ENCODE measurements at regions of chr1 and their contacts with region 1.

Region 1: GRCh38 chr1:192580351-192580962 is 4.9 kb downstream of the RGS1 start:
- DNase-seq: peak in 3 of 9 donors; percentile 15 to 44 (median 38)
- ATAC-seq: peak; percentile 40
- H3K4me3 ChIP-seq: no peak overlapping the region
- H3K4me3 Mint-ChIP-seq: peak overlapping the region in 2 of 10 donors; percentile 31 to 40
- H3K27ac ChIP-seq: no peak overlapping the region
- H3K27ac Mint-ChIP-seq: peak overlapping the region in 2 of 9 donors; percentile 8 to 43
- H3K4me1 ChIP-seq: peaks cover 7 to 15% of the 10 kb centered on the region in 2 donors
- H3K4me1 Mint-ChIP-seq: peaks cover 8 to 44% (median 28%) of the 10 kb centered on the region in 7 donors
- H3K27me3 ChIP-seq: no peaks in the 10 kb centered on the region
- H3K27me3 Mint-ChIP-seq: peaks cover 0 to 2% (median 0%) of the 10 kb centered on the region in 5 donors

Region 2: GRCh38 chr1:191371626-191372025 is 1208.8 kb before region 1 on chr1:
- CTCF ChIA-PET with region 1: no interaction called
- POLR2A ChIA-PET with region 1: no interaction called
- intact Hi-C with region 1: no loop called
- DNase-seq: no peak
- ATAC-seq: no peak
- H3K4me3 ChIP-seq: no peak overlapping the region
- H3K4me3 Mint-ChIP-seq: no peak overlapping the region
- H3K27ac ChIP-seq: no peak overlapping the region
- H3K27ac Mint-ChIP-seq: no peak overlapping the region
- H3K4me1 ChIP-seq: no peaks in the 10 kb centered on the region
- H3K4me1 Mint-ChIP-seq: no peaks in the 10 kb centered on the region
- H3K27me3 ChIP-seq: no peaks in the 10 kb centered on the region
- H3K27me3 Mint-ChIP-seq: no peaks in the 10 kb centered on the region

Region 3: GRCh38 chr1:192506741-192507155 is 73.7 kb before region 1 on chr1:
- CTCF ChIA-PET with region 1: no interaction called
- POLR2A ChIA-PET with region 1: no interaction called
- intact Hi-C with region 1: loop called (anchors 1 to 2 kb)
- DNase-seq: no peak
- ATAC-seq: peak; percentile 27
- H3K4me3 ChIP-seq: no peak overlapping the region
- H3K4me3 Mint-ChIP-seq: no peak overlapping the region
- H3K27ac ChIP-seq: no peak overlapping the region
- H3K27ac Mint-ChIP-seq: no peak overlapping the region
- H3K4me1 ChIP-seq: peaks cover 0 to 3% of the 10 kb centered on the region in 2 donors
- H3K4me1 Mint-ChIP-seq: peaks cover 0 to 4% (median 0%) of the 10 kb centered on the region in 7 donors
- H3K27me3 ChIP-seq: no peaks in the 10 kb centered on the region
- H3K27me3 Mint-ChIP-seq: peaks cover 0 to 6% (median 0%) of the 10 kb centered on the region in 5 donors

Region 4: GRCh38 chr1:192539297-192540092 is 41.0 kb before region 1 on chr1:
- CTCF ChIA-PET with region 1: interaction called, 3 read pairs
- POLR2A ChIA-PET with region 1: no interaction called
- intact Hi-C with region 1: loop called (anchors 1 kb)
- DNase-seq: peak in 4 of 9 donors; percentile 4 to 22 (median 6)
- ATAC-seq: peak; percentile 37
- H3K4me3 ChIP-seq: peak overlapping the region; percentile 8
- H3K4me3 Mint-ChIP-seq: peak overlapping the region; percentile 12 to 88 (median 56)
- H3K27ac ChIP-seq: peak overlapping the region; percentile 47
- H3K27ac Mint-ChIP-seq: peak overlapping the region; percentile 80 to 97 (median 89)
- H3K4me1 ChIP-seq: peaks cover 10 to 29% of the 10 kb centered on the region in 2 donors
- H3K4me1 Mint-ChIP-seq: peaks cover 15 to 57% (median 29%) of the 10 kb centered on the region in 7 donors
- H3K27me3 ChIP-seq: no peaks in the 10 kb centered on the region
- H3K27me3 Mint-ChIP-seq: no peaks in the 10 kb centered on the region

Region 5: GRCh38 chr1:192545896-192546521 is 34.4 kb before region 1 on chr1:
- CTCF ChIA-PET with region 1: interaction called, 3 read pairs
- POLR2A ChIA-PET with region 1: no interaction called
- intact Hi-C with region 1: loop called in 1 of 2 experiments (anchors 1 kb)
- DNase-seq: no peak
- ATAC-seq: peak; percentile 45
- H3K4me3 ChIP-seq: no peak overlapping the region
- H3K4me3 Mint-ChIP-seq: peak overlapping the region in 1 of 10 donors; percentile 39
- H3K27ac ChIP-seq: no peak overlapping the region
- H3K27ac Mint-ChIP-seq: peak overlapping the region in 1 of 9 donors; percentile 25
- H3K4me1 ChIP-seq: peaks cover 0 to 43% of the 10 kb centered on the region in 2 donors
- H3K4me1 Mint-ChIP-seq: peaks cover 5 to 66% (median 15%) of the 10 kb centered on the region in 7 donors
- H3K27me3 ChIP-seq: no peaks in the 10 kb centered on the region
- H3K27me3 Mint-ChIP-seq: no peaks in the 10 kb centered on the region

Region 6: DNA sequence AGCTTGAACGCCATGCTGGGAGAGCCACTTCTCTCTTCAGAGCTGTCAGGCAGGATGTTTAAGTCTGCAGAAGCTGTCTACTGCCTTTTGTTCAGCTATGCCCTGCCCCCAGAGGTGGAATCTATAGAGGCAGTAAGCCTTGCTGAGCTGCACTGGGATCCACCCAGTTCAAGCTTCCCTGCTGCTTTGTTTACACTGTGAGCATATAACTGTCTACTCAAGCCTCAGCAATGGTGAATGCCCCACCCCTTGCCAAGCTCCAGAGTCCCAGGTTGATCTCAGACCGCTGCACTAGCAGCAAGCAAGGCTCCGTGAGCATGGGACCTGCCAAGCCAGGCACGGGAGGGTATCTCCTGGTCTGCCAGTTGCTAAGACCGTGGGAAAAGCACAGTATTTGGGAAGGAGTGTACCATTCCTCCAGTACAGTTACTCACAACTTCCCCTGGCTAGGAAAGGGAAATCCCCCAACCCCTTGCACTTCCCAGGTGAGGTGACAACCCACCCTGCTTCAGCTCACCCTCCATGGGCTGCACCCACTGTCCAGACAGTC is 88.1 kb after region 1 on chr1:
- CTCF ChIA-PET with region 1: no interaction called
- POLR2A ChIA-PET with region 1: no interaction called
- intact Hi-C with region 1: no loop called
- DNase-seq: no peak
- ATAC-seq: no peak
- H3K4me3 ChIP-seq: no peak overlapping the region
- H3K4me3 Mint-ChIP-seq: no peak overlapping the region
- H3K27ac ChIP-seq: no peak overlapping the region
- H3K27ac Mint-ChIP-seq: no peak overlapping the region
- H3K4me1 ChIP-seq: no peaks in the 10 kb centered on the region
- H3K4me1 Mint-ChIP-seq: no peaks in the 10 kb centered on the region
- H3K27me3 ChIP-seq: no peaks in the 10 kb centered on the region
- H3K27me3 Mint-ChIP-seq: peaks cover 2 to 10% (median 7%) of the 10 kb centered on the region in 5 donors

Measured in naive thymus-derived CD4-positive, alpha-beta T cell (primary cell).